PC-9 (cell line): ENCODE measurements at regions of chr5 and their contacts with region 1.

Region 1: DNA sequence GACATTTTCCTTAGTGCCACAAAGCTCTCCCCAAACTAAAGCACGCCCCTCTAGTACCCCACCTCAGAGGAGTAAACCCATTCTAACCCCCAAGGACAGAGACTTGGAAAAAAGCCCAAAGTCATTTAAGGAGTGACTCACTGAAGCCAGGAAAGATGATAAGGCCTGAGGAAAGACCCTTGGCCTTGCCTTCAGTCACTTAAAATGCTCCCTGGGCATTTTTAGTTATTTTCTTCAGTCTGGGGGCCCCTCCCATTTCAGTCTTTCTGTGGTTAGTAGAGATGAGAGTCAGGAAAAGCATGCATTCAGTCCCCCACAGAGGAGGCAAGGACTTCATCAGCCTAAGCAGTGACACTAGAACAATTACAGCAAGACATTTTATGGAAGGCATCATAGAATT is 13.7 kb upstream of the TLX3 start:
- DNase-seq: peak in 1 of 2 experiments; percentile 46
- H3K4me3 ChIP-seq: no peak overlapping the region
- H3K27ac ChIP-seq: peak overlapping the region; percentile 20; the same call in 1 of the 2 replicates
- H3K4me1 ChIP-seq: peaks cover 18% of the 10 kb centered on the region
- H3K27me3 ChIP-seq: no peaks in the 10 kb centered on the region
- CTCF ChIP-seq: no peak

Region 2: DNA sequence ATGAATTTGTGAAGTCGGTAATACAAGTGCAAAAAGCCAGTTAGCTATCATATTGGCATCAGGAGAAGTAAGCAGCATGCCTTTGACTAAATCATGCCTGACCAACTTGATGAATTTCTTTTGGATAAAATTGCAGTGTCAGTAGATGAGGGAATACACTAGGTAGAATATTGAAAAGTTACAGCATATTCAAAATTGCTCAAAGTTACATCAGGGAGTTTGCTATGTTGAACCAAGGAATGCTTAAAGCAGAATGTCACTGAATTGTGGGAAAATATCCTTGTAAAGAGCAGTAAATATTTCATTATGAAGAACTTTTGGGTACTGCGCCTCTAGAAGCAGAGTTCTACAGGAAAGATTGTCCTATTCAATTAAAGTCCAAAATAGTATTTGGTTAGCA is 73.4 kb before region 1 on chr5:
- CTCF ChIA-PET with region 1: no interaction called
- POLR2A ChIA-PET with region 1: interaction called, 35 read pairs
- intact Hi-C with region 1: no loop called
- DNase-seq: no peak
- H3K4me3 ChIP-seq: no peak overlapping the region
- H3K27ac ChIP-seq: no peak overlapping the region
- H3K4me1 ChIP-seq: no peaks in the 10 kb centered on the region
- H3K27me3 ChIP-seq: no peaks in the 10 kb centered on the region
- CTCF ChIP-seq: no peak

Region 3: GRCh38 chr5:171450423-171451331 is 155.4 kb after region 1 on chr5:
- CTCF ChIA-PET with region 1: no interaction called
- POLR2A ChIA-PET with region 1: no interaction called
- intact Hi-C with region 1: no loop called
- DNase-seq: no peak
- H3K4me3 ChIP-seq: no peak overlapping the region; the same call in 1 of the 2 replicates
- H3K27ac ChIP-seq: no peak overlapping the region
- H3K4me1 ChIP-seq: no peaks in the 10 kb centered on the region
- H3K27me3 ChIP-seq: no peaks in the 10 kb centered on the region
- CTCF ChIP-seq: no peak